ENCODE measurements at regions of chr17 and their contacts with region 1.

Region 1: DNA sequence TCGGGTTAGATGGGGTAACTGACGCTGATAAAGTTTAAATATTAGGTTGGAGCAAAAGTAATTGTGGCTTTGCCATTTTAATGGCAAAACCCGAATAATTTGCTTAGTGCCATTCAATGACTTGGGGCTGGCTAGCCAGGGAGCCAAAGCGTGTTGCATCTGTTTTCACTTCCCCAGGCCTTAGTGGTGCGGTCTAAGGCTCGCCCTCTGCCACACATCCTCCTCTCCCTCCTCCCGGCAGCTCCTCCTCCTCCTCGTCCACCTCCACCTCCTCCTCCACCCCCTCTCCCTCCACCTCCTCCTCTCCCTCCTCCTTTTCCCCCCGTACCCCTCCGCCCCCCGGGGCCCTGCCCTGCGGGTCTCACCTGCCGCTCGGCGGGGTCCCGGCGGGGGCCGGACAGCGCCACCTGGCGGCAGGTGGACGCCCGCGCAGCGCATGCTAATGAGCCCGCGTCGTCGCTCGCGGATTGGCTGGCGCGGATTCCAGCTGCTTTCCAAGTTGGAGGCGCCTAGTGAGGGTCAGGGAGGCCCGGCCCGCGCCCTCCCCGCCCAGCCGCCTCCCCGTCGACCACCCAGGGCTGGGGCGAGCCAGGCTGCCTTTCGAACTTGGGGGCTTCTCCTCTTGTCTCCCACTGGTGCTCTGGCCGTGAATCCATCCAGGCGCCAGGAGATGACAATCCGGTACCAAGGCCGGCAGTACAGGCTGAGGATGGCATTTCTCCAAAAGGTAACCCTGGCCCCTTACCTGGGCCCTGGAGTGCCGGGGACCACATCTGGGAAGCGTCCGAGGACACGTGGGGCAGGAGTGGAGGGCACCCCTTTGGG is 36.6 kb upstream of the RGS9 start:
- DNase-seq: peak; percentile 96
- H3K4me3 ChIP-seq: peak overlapping the region; percentile 48 to 57
- H3K27ac ChIP-seq: peak overlapping the region in 1 of 2 experiments; percentile 7; a peak in 1 of 4 replicates
- H3K4me1 ChIP-seq: peaks cover 0 to 12% of the 10 kb centered on the region in 2 experiments; a peak in 1 of 4 replicates
- H3K27me3 ChIP-seq: no peaks in the 10 kb centered on the region
- CTCF ChIP-seq: peak; percentile 97
- EP300 ChIP-seq: no peak; a peak in 1 of 4 replicates
- RAD21 ChIP-seq: peak; percentile 72

Region 2: DNA sequence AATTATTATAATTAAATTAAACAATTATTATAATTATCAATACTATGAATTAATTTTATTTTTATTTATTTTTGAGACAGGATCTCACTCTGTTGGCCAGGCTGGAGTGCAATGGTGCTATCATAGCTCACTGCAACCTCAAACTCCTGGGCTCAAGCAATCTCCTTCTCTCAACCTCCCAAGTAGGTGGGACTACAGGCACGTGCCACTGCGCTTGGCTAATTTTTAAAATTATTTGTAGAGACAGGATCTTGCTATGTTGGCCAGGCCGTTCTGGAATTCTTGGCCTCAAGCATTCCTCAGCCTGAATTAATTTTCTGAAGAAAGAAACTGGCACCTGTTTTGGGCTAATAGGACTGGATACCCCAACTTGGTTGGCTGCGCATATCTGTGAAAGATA is 54.3 kb before region 1 on chr17:
- CTCF ChIA-PET with region 1: interaction called, 10 read pairs
- POLR2A ChIA-PET with region 1: no interaction called
- DNase-seq: no peak
- H3K4me3 ChIP-seq: no peak overlapping the region
- H3K27ac ChIP-seq: no peak overlapping the region
- H3K4me1 ChIP-seq: peaks cover 0 to 2% of the 10 kb centered on the region in 2 experiments; a peak in 2 of 4 replicates
- H3K27me3 ChIP-seq: no peaks in the 10 kb centered on the region
- CTCF ChIP-seq: no peak
- EP300 ChIP-seq: no peak
- RAD21 ChIP-seq: no peak

Region 3: GRCh38 chr17:65064452-65065019 is 36.0 kb before region 1 on chr17:
- CTCF ChIA-PET with region 1: interaction called, 23 read pairs
- POLR2A ChIA-PET with region 1: no interaction called
- DNase-seq: no peak
- H3K4me3 ChIP-seq: no peak overlapping the region
- H3K27ac ChIP-seq: peak overlapping the region in 1 of 2 experiments; percentile 29; a peak in 2 of 4 replicates
- H3K4me1 ChIP-seq: peaks cover 0 to 7% of the 10 kb centered on the region in 2 experiments; a peak in 2 of 4 replicates
- H3K27me3 ChIP-seq: no peaks in the 10 kb centered on the region
- CTCF ChIP-seq: no peak
- EP300 ChIP-seq: no peak
- RAD21 ChIP-seq: no peak

Region 4: DNA sequence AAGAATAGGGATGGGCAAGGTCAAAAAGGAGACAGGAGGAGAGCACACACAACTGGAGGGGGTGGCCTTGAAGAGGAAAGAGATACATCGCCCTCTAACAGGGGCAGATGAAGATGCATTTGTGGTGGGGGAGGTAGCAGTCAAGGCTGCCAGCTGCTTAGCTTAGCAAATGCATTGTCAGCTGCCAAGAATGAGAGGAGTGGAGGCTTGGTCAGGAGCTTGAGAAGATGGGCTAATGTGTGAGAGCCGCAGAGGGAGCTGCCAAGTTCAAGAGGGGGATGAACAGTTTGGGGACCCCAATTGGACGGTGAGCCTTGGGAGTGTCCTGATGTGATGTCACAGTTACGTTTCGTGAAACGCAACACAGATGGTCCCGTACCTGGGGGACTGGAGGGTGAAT is 15.1 kb before region 1 on chr17:
- CTCF ChIA-PET with region 1: interaction called, 86 read pairs
- POLR2A ChIA-PET with region 1: no interaction called
- DNase-seq: no peak
- H3K4me3 ChIP-seq: no peak overlapping the region
- H3K27ac ChIP-seq: no peak overlapping the region
- H3K4me1 ChIP-seq: no peaks in the 10 kb centered on the region
- H3K27me3 ChIP-seq: peaks cover 32% of the 10 kb centered on the region; the same call in 1 of the 2 replicates
- CTCF ChIP-seq: no peak
- EP300 ChIP-seq: no peak
- RAD21 ChIP-seq: no peak

Region 5: DNA sequence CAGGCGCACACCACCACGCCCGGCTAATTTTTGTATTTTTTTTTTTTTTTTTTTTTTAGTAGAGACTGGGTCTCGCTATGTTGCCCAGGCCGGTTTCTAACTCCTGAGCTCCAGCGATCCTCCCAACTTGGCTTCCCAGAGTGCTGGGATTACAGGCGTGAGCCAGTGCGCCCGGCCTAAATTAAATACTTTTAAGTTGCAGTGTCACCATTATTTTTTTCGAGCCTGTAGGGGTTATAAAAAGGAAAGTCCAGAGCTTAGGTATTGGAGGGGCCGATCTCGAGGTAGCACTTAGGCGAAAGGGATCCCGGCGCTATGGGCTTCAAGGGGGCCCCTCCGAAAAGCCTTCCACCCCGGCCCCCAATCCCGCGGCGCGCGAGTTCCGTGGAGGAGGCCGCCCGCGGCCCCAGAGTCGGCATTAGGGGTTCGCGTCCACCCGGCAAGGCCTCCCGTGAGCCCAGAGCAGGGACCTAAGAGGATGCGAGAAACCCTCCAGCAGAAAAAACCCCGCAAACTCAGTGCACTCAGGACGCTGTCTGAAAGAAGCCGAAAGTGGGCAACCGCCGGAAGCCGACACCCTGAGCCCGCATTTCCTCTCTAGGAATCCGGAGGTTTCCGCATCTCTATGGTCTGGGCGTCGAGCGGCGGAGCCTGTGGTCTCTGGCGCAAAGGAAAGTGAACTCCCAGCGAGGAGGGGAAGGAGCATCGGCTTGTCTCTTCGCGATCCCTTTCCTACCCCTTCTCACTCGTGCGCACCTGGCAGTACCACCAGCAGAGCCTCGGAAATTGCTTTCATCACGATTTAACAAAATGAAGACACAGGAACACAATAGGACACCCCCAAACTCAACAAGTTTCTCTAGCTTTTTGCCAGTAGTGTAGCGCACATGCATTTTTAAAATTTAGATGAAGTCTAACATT is 22.6 kb after region 1 on chr17:
- CTCF ChIA-PET with region 1: interaction called, 13 read pairs
- POLR2A ChIA-PET with region 1: interaction called, 8 read pairs
- DNase-seq: peak; percentile 95
- H3K4me3 ChIP-seq: peak overlapping the region; percentile 51 to 70
- H3K27ac ChIP-seq: peak overlapping the region; percentile 57 to 90
- H3K4me1 ChIP-seq: peaks cover 8% of the 10 kb centered on the region in 2 experiments; a peak in 3 of 4 replicates
- H3K27me3 ChIP-seq: no peaks in the 10 kb centered on the region; the same call in 1 of the 2 replicates
- CTCF ChIP-seq: no peak
- EP300 ChIP-seq: no peak
- RAD21 ChIP-seq: 0 out of 2 replicates have a peak, but pooled peaks have one; percentile 25

Region 6: GRCh38 chr17:65163990-65164495 is 63.5 kb after region 1 on chr17:
- CTCF ChIA-PET with region 1: interaction called, 10 read pairs
- POLR2A ChIA-PET with region 1: no interaction called
- DNase-seq: no peak
- H3K4me3 ChIP-seq: no peak overlapping the region
- H3K27ac ChIP-seq: no peak overlapping the region
- H3K4me1 ChIP-seq: peaks cover 0 to 7% of the 10 kb centered on the region in 2 experiments; a peak in 1 of 4 replicates
- H3K27me3 ChIP-seq: no peaks in the 10 kb centered on the region
- CTCF ChIP-seq: no peak
- EP300 ChIP-seq: no peak
- RAD21 ChIP-seq: no peak

Region 7: DNA sequence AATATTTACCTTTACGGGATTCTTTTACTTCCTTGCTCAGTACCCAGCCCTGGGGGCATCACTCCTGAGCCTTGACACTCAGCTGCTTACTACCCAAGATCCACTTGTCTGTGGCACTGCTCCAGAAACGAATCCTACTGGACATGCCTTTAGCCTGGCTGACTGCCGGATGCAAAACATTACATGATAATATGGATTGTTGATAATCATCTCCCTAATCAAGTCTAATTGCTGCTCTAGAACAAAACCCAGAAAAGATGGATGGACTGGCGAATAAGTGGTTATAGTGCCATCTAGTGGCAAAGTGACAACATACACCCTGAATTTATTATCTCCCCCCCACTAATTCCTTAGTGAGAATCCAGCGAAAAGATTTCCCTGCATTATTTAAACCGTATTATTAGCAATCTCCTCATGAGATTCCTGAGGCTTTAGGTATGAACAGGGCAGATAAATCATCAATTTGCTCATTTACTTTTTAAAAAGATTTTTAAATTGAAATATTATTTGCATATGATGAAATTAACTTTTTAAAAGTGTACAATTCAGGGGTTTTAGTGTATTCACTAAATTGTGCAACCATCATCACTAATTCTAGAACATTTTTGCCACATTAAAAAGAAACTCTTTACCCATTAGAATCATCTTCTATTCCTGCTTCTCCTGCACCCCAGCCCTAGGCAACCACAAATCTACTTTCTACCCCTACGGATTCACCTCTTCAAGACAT is 98.3 kb after region 1 on chr17:
- CTCF ChIA-PET with region 1: interaction called, 32 read pairs
- POLR2A ChIA-PET with region 1: no interaction called
- DNase-seq: peak; percentile 90
- H3K4me3 ChIP-seq: no peak overlapping the region
- H3K27ac ChIP-seq: 0 out of 4 replicates have a peak overlapping the region, but pooled peaks of 1 of the 2 experiments have one; percentile 4
- H3K4me1 ChIP-seq: peaks cover 0 to 4% of the 10 kb centered on the region in 2 experiments; a peak in 1 of 4 replicates
- H3K27me3 ChIP-seq: no peaks in the 10 kb centered on the region
- CTCF ChIP-seq: peak; percentile 96
- EP300 ChIP-seq: peak; percentile 52 to 92; a peak in 3 of 4 replicates
- RAD21 ChIP-seq: peak; percentile 99

Region 8: DNA sequence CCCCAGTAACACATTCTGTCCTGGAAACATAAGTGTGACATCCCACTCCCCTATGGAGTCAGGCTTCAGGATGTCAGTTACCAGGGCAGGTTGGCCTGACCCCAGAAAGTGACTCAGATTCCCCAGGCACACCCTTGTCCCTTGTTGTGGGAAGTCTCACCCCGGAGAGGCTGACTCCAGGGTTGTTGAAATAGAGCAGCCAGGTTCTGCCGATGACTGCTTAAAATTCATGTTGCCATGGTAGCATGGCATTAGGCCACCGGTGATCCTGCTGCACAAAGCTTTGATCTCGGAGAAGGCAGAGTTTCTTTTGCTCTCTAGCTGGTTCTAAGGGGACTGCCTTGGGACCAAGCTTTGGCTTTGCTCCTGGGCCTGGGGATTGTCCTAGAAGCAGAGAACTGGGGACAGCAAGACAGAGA is 143.3 kb after region 1 on chr17:
- CTCF ChIA-PET with region 1: no interaction called
- POLR2A ChIA-PET with region 1: no interaction called
- DNase-seq: no peak
- H3K4me3 ChIP-seq: no peak overlapping the region
- H3K27ac ChIP-seq: no peak overlapping the region
- H3K4me1 ChIP-seq: peaks cover 0 to 4% of the 10 kb centered on the region in 2 experiments; a peak in 1 of 4 replicates
- H3K27me3 ChIP-seq: no peaks in the 10 kb centered on the region
- CTCF ChIP-seq: no peak
- EP300 ChIP-seq: no peak
- RAD21 ChIP-seq: no peak

Region 9: GRCh38 chr17:65287040-65287439 is 186.5 kb after region 1 on chr17:
- CTCF ChIA-PET with region 1: no interaction called
- POLR2A ChIA-PET with region 1: no interaction called
- DNase-seq: no peak
- H3K4me3 ChIP-seq: no peak overlapping the region
- H3K27ac ChIP-seq: peak overlapping the region in 1 of 2 experiments; percentile 23; a peak in 1 of 4 replicates
- H3K4me1 ChIP-seq: peaks cover 0 to 9% of the 10 kb centered on the region in 2 experiments; a peak in 2 of 4 replicates
- H3K27me3 ChIP-seq: no peaks in the 10 kb centered on the region
- CTCF ChIP-seq: no peak
- EP300 ChIP-seq: peak in 1 of 2 experiments; percentile 46; a peak in 2 of 4 replicates
- RAD21 ChIP-seq: no peak

Region 10: GRCh38 chr17:65336707-65337106 is 236.2 kb after region 1 on chr17:
- CTCF ChIA-PET with region 1: no interaction called
- POLR2A ChIA-PET with region 1: no interaction called
- DNase-seq: no peak
- H3K4me3 ChIP-seq: no peak overlapping the region
- H3K27ac ChIP-seq: no peak overlapping the region
- H3K4me1 ChIP-seq: no peaks in the 10 kb centered on the region
- H3K27me3 ChIP-seq: no peaks in the 10 kb centered on the region
- CTCF ChIP-seq: no peak
- EP300 ChIP-seq: no peak
- RAD21 ChIP-seq: no peak

Measured in SK-N-SH (cell line).